ENCODE measurements at regions of chr15 and their contacts with region 1.

Region 1: DNA sequence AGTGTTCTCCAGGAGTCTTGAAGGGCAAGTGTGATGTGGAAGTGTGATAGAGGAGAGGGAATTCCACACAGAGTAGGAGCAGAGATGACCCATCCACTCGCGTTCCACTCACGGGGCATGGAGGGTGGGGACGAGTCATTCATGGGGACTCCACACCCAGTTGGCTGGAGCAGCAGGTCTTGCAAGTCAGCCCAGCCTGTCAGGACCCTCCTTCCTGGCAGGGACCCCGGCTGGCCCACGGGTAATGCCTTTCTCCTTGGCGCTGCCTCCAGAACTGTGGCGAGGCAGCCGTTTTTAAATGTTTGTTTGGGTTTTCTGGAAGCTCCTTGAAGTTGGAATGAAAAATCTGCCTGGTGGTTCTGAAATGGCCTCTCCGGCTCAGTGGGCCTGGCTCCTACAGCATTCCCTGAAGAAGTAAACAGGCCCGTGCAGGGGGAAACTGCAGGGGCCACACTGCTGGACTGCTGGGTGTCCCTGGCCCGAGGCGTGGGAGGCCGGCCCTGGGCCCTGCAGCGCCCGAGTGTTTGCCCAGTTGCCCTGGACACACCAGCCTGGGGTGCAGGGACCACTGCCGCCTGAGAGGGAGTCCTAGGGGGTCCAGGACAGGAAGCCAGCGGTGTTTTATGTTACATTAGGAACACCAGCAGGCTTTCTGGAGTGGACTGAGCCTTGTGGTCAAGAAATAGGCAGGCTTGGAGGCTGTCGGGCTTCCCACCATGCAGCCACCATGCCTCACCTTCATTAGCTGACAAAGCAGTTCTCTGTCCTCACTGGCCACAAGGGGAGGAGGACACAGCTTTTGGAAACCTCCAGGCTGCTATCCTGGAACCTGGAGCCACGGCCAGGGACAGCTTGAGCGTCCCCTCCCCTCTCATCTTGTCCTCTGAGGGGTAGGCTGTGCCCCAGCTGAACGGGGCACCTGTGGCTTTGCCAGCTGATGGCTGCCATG is 61.3 kb downstream of the CEMIP start:
- DNase-seq: no peak
- ATAC-seq: peak; percentile 10

Region 2: DNA sequence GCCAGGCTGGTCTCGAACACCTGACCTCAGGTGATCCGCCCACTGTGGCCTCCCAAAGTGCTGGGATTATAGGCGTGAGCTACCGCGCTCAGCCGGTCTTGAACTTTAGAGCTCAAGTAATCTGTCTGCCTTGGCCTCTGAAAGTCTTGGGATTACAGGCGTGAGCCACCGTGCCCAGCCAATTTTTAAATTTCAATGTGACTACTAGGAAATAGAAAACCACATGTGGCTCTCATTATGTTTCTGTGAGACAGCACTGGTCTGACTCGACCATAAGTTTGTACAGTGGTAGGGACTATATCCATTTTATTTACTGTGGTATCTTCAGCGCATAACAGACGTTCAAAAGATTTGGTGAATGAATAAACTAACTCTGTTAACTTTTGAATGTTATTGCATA is 771.9 kb before region 1 on chr15:
- intact Hi-C with region 1: no loop called
- DNase-seq: no peak
- ATAC-seq: peak; percentile 53

Region 3: GRCh38 chr15:80440024-80440423 is 400.4 kb before region 1 on chr15:
- intact Hi-C with region 1: loop called (anchors 2 kb)
- DNase-seq: no peak
- ATAC-seq: no peak

Region 4: DNA sequence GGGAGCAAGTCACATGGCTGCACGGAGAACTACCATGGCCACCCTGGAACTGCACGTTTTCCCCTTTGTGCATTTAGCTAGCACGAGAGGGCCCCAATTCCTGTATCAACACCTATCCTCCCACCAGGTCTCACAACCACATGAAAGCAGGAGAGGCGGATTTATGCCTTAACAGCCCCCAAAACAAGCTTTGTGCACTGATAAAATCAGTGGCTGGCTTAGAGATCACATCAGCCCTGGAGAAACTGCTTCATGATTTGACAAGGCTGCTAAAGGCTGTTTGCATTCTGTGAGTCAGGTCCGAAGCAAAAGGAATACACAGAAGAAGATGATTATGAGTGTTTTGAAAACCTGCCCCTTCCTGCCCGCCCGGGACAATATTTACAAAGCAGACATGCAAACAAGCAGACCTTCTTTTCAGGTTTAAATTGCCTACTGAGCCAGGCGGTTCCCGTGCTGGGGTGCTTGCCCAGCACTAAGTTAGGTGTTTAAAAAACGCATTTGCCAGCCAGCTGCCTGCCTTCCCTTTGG is 35.4 kb before region 1 on chr15:
- intact Hi-C with region 1: no loop called
- DNase-seq: no peak
- ATAC-seq: no peak

Measured in sciatic nerve (tissue), 2 donors.